ENCODE measurements at regions of chr6 and their contacts with region 1.

Region 1: DNA sequence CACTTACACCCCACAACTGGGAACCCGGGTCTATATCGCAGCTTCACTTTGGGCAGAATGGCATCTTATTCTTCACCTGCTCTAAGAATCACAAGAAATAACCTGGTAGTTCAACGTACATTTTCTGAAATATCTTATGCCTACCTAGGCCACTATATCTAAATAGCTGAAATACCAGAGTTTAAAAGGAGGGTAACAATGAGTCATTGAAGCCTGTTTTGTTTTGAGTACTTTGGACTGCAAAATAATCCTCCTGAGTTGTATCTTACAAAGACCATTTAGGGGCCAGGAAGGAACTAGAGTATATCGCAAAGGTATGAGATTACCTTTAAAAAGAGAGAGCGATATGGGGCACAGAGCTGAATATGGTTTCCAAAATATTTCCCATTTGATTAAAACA is 96.7 kb upstream of the NUP153 start:
- DNase-seq: no peak
- H3K4me3 Mint-ChIP-seq: no peak overlapping the region
- H3K27ac Mint-ChIP-seq: no peak overlapping the region
- H3K4me1 Mint-ChIP-seq: peaks cover 3% of the 10 kb centered on the region
- H3K27me3 Mint-ChIP-seq: peaks cover 15% of the 10 kb centered on the region

Region 2: GRCh38 chr6:17552861-17553260 is 250.5 kb before region 1 on chr6:
- CTCF ChIA-PET with region 1: no interaction called
- POLR2A ChIA-PET with region 1: no interaction called
- DNase-seq: no peak
- H3K4me3 Mint-ChIP-seq: no peak overlapping the region
- H3K27ac Mint-ChIP-seq: no peak overlapping the region
- H3K4me1 Mint-ChIP-seq: no peaks in the 10 kb centered on the region
- H3K27me3 Mint-ChIP-seq: peaks cover 5% of the 10 kb centered on the region

Region 3: DNA sequence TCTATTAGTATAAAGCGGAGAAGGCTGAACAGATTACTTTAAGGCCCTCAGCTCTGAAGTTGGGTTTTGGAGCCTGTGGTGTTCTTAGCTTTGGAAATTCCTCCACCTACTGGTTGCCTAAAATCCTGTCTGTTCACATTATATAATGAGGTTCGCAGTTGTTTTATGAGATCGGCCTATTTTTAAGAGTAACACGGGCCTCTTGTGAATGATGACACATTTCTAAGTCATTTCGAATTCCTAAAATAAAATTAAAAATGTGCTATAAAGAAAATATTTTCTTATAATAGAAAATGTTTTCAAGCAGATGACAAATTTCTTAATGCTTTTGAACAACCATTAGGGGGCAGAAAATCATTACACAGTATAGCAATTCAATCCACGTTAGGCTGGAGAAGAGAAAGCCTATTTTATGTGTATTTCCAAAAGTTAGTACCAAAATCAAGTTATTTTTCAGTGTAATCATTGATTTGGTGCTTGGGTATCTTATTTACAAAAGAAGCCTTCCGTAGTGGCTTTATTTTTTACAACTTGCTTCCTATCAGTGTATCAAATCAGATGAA is 219.1 kb before region 1 on chr6:
- CTCF ChIA-PET with region 1: interaction called, 32 read pairs
- POLR2A ChIA-PET with region 1: no interaction called
- DNase-seq: no peak
- H3K4me3 Mint-ChIP-seq: no peak overlapping the region
- H3K27ac Mint-ChIP-seq: no peak overlapping the region
- H3K4me1 Mint-ChIP-seq: peaks cover 8% of the 10 kb centered on the region
- H3K27me3 Mint-ChIP-seq: peaks cover 10% of the 10 kb centered on the region

Region 4: DNA sequence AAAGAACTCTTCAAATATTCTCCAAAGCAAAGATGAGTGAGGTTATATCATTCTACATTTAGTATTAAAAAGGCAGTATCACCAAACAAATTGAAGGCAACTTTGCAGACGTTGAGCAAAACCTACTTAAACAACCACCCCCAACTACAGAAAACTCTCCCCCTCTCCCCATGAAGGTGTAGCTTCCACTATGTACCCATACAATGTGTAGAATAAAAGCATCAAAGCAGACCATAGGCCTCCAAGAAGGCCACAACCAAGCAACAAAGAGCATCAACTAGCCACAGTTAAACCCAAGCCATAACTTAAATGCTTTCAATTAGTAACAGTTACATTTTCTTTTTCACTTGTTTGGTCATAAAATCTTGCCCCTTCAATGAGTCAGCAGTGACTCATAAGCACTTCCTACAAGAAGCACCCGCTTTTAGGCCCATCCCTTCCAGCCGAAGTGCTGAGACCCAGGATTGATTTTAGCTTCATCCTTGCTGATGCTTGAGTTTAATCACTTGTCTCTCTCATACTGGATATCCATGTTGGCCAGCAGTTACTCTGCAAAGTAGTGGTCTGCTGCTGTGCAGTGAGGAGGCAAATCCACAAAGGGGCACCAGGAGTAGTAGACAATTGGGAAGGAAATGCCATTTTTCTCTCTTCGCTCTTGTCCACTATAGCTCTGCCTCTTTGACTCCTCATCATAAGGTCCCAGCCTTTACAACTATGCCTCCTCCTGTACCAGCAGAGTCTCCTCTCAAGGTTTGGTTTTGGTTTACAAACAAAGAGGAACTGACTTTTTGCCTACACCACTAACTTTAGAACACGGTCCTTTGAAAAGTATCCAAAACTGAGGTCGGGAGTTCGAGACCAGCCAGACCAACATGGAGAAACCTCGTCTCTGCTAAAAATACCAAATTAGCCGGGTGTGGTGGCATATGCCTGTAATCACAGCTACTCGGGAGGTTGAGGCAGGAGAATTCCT is 88.2 kb before region 1 on chr6:
- CTCF ChIA-PET with region 1: interaction called, 13 read pairs
- POLR2A ChIA-PET with region 1: no interaction called
- DNase-seq: peak; percentile 56
- H3K4me3 Mint-ChIP-seq: peak overlapping the region; percentile 67
- H3K27ac Mint-ChIP-seq: peak overlapping the region; percentile 88
- H3K4me1 Mint-ChIP-seq: peaks cover 23% of the 10 kb centered on the region
- H3K27me3 Mint-ChIP-seq: peaks cover 3% of the 10 kb centered on the region

Region 5: GRCh38 chr6:17816921-17817611 is 13.7 kb after region 1 on chr6:
- CTCF ChIA-PET with region 1: interaction called, 20 read pairs
- POLR2A ChIA-PET with region 1: no interaction called
- DNase-seq: no peak
- H3K4me3 Mint-ChIP-seq: no peak overlapping the region
- H3K27ac Mint-ChIP-seq: no peak overlapping the region
- H3K4me1 Mint-ChIP-seq: no peaks in the 10 kb centered on the region
- H3K27me3 Mint-ChIP-seq: peaks cover 11% of the 10 kb centered on the region

Region 6: GRCh38 chr6:17842014-17842776 is 38.8 kb after region 1 on chr6:
- CTCF ChIA-PET with region 1: no interaction called
- POLR2A ChIA-PET with region 1: no interaction called
- DNase-seq: no peak
- H3K4me3 Mint-ChIP-seq: no peak overlapping the region
- H3K27ac Mint-ChIP-seq: no peak overlapping the region
- H3K4me1 Mint-ChIP-seq: peaks cover 4% of the 10 kb centered on the region
- H3K27me3 Mint-ChIP-seq: peaks cover 18% of the 10 kb centered on the region

Region 7: DNA sequence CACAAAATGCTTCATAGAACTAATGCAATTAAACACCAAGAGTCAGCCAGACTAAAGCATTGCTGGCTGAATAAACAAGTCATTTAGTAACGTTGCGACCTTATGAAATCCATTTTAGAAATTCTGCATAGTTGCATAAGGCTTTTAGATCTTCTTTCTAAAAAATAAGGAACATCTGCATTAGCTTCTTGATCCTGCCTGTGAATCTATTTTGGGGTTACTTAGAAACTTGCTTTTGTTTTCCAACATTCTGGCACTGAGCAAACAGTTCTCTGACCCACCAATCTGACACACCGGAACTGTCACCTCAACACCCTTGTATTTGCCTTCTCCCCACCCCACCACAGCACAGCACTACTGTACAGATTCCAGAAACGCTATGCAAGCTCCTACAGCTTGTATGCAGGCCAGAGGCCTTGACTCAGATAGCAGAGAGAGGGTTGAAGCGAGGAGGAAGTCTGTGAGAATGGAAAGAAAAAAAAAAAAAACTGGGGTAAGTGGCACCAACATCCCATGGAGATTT is 129.0 kb after region 1 on chr6:
- CTCF ChIA-PET with region 1: no interaction called
- POLR2A ChIA-PET with region 1: no interaction called
- DNase-seq: no peak
- H3K4me3 Mint-ChIP-seq: no peak overlapping the region
- H3K27ac Mint-ChIP-seq: no peak overlapping the region
- H3K4me1 Mint-ChIP-seq: no peaks in the 10 kb centered on the region
- H3K27me3 Mint-ChIP-seq: peaks cover 13% of the 10 kb centered on the region